Transverse colon (tissue), 4 donors: ENCODE measurements at regions of chr1 and their contacts with region 1.

Region 1: GRCh38 chr1:21368515-21369289 is 71.2 kb upstream of the NBPF3 start:
- DNase-seq: peak; percentile 84
- H3K4me3 ChIP-seq: peak overlapping the region in 1 of 4 donors; percentile 8
- H3K27ac ChIP-seq: peak overlapping the region in 2 of 4 donors; percentile 44 to 59
- H3K4me1 ChIP-seq: peaks cover 0 to 9% (median 4%) of the 10 kb centered on the region in 4 donors
- H3K27me3 ChIP-seq: no peaks in the 10 kb centered on the region
- CTCF ChIP-seq: peak; percentile 98 to 100 (median 100)
- EP300 ChIP-seq: no peak
- POLR2A ChIP-seq: no peak

Region 2: DNA sequence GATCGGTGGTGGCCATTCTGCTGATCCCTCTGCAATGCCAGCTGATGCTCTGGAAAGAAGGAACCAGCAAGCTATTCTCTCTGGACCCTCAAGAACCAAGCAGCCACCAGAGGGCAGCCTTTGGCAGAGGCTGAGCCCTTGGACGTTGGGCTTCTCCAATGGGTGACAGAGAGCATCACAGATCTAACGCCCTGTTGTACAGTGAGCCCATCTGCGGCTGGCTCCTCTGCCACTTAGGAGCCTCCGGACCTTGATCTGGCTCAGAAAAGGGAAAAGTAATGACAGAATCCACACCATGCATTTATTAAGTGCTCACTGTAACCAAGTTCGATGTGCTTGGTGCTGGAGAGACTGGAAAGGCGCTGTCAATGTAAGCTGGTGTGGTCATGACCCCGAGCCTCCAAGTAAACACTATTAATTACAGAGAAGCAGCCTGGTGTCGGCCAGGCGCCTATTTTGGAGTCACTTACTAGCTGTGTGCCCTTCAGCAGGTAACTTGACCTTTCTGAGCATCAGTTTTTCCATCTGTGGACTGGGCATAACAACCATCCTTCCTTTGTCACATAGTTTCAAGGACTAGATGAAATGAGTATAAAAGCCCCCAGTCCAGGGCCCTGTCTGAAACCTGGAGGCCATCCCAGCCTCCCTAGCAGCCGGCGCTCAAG is 113.3 kb before region 1 on chr1:
- in situ Hi-C with region 1: loop called in 3 of 4 experiments (anchors 5 to 10 kb)
- intact Hi-C with region 1: loop called (anchors 1 kb)
- DNase-seq: peak; percentile 90
- H3K4me3 ChIP-seq: no peak overlapping the region
- H3K27ac ChIP-seq: peak overlapping the region; percentile 49 to 88 (median 84)
- H3K4me1 ChIP-seq: peaks cover 12 to 43% (median 25%) of the 10 kb centered on the region in 4 donors
- H3K27me3 ChIP-seq: no peaks in the 10 kb centered on the region
- CTCF ChIP-seq: peak; percentile 78 to 86 (median 80)
- EP300 ChIP-seq: no peak
- POLR2A ChIP-seq: no peak

Region 3: DNA sequence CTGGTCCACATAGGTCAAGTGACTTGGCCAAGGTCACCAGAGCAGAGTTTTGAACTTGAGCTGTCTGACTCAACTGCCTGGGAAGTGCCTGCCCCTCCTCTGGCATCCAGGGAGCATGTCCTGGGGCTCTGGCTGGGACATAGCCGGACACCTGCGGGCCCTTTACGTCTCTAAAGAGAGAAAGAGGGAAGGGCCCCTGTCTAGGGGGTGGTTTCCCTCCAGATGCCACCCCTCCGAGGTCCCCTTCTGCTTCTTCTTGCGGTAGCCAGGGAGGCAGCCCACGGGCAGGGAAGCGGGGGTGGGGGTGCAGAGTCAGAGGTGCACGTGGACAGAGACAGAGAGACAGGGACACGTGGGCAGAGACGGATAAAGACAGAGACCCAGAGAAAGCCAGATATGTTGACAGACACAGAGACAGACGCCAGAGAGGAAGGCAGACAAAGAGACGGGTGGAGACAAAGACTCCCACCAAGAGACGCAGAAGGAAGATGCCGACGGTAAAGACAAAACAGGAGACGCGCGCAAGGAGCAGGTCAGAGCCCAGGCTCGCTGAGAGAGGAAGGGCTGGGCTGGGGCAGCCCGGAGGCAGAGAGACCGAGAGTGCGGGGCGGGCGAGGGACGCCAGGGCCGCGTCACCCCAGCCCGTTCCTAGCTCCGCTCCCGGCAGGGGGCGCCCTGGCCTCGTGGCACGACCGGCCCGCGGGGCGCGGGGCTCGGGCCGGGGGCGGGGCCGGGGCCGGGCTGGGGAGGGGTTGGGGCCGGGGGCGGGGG is 140.1 kb after region 1 on chr1:
- in situ Hi-C with region 1: no loop called
- intact Hi-C with region 1: no loop called
- DNase-seq: peak; percentile 62
- H3K4me3 ChIP-seq: peak overlapping the region in 1 of 4 donors; percentile 38
- H3K27ac ChIP-seq: no peak overlapping the region
- H3K4me1 ChIP-seq: peaks cover 0 to 18% (median 8%) of the 10 kb centered on the region in 4 donors
- H3K27me3 ChIP-seq: peaks cover 55% of the 10 kb centered on the region
- CTCF ChIP-seq: peak; percentile 28 to 51 (median 47)
- EP300 ChIP-seq: no peak
- POLR2A ChIP-seq: no peak